Activated CD8-positive, alpha-beta memory T cell treated with anti-CD3 and anti-CD28 coated beads, Interleukin-2, amount 10 ng/mL, durations not matched to agents 7 days and 5 days (primary cell): ENCODE measurements at regions of chr11 and their contacts with region 1.

Region 1: DNA sequence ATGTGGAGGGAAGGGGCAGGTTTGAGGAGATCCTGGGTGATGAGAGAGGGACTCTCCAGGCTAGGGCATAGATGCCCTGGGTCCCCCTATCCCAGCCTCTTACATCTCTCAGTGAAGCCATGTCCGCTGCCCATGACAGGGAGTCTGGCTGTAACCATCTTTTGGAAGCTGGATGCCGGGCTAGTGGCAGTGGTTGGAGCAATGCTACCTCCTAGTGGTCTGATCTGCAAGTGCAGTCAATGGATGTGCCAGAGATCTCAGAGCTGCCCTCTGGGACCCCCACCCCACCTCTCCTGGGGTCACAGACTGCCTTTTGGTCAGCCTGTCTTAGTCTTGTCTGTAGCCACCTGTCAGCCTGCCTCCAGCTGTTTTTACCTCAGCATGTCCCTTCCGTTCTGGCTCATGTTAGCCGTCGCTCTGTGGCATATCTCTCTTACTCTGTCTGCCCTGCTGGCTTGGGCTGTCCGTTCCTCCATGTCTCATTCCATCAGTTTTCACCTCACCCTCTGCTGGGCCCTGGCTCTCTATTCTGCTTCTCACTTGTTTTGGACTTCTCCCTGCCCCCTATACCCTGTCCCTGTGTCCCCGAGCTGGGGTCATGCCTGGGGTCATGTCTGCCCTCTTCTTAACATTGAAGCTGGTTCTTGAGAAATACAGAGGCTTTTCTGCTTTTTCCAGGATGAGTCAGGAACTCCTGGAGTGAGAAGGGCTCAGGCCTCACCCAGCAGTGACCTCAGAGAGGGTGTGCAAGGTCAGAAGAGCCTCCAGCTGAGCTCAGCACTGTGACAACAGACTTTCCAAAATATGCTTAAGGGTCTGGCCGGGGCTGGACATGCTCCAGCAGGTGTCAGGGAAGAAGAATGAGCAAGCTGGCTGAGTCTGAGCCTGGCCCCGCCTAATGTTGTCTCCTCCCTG is 52.0 kb upstream of the THY1 start:
- DNase-seq: peak; percentile 68
- ATAC-seq: peak; percentile 67
- H3K4me3 Mint-ChIP-seq: no peak overlapping the region
- H3K27ac Mint-ChIP-seq: no peak overlapping the region
- H3K4me1 Mint-ChIP-seq: no peaks in the 10 kb centered on the region
- H3K27me3 Mint-ChIP-seq: peaks cover 9% of the 10 kb centered on the region

Region 2: DNA sequence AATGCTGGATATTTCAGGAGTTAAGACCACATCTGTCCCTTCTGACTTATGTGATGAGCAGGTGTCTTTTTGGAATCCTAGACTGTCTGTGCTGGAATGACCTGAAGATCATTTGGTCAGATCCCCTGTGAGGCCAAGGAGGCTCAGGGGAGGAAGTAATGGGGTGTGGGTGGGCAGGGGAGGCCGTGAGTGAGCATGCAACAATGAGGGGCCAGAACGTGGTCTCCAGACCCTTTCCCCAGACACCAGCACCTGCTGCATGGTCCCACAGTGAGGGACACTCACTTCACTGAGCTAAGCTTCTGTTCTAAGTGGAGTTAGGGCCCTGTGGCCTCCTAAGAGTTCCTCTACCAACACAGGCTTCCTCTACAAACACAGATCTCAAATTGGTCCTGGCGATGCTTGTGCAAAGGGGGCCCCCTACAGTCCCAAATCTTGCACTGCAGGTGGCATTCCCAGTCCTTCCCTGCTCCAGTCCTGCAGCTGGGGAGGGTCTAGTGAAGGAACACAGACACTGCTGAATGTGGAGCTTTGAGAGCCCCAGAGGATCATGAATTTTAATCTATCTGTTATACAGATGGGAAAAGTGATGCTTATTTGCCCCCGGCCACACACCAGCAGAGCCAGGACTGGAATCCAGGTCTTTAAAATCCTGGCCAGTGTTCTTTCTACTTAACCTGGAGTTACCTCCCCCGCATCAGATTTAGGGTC is 100.9 kb before region 1 on chr11:
- CTCF ChIA-PET with region 1: interaction called, 32 read pairs
- DNase-seq: no peak
- ATAC-seq: peak; percentile 66
- H3K4me3 Mint-ChIP-seq: no peak overlapping the region
- H3K27ac Mint-ChIP-seq: peak overlapping the region; percentile 62
- H3K4me1 Mint-ChIP-seq: peaks cover 27% of the 10 kb centered on the region
- H3K27me3 Mint-ChIP-seq: peaks cover 4% of the 10 kb centered on the region

Region 3: GRCh38 chr11:119381181-119381988 is 93.6 kb before region 1 on chr11 and contains the start of gene USP2:
- CTCF ChIA-PET with region 1: interaction called, 32 read pairs
- DNase-seq: peak; percentile 96
- ATAC-seq: peak; percentile 98
- H3K4me3 Mint-ChIP-seq: no peak within 1 kb of the TSS
- H3K27ac Mint-ChIP-seq: no peak within 1 kb of the TSS
- H3K4me1 Mint-ChIP-seq: peaks cover 9% of the 10 kb centered on the region
- H3K27me3 Mint-ChIP-seq: peaks cover 7% of the 10 kb centered on the region
- total RNA-seq, gene USP2: 0.28 to 0.76 TPM